Uterus (tissue), 4 donors: ENCODE measurements at regions of chr14 and their contacts with region 1.

Region 1: GRCh38 chr14:69818757-69819191 is 21.7 kb upstream of the SLC10A1 start:
- DNase-seq: peak; percentile 29 to 38
- H3K4me3 ChIP-seq: no peak overlapping the region
- H3K27ac ChIP-seq: no peak overlapping the region
- H3K4me1 ChIP-seq: no peaks in the 10 kb centered on the region
- H3K27me3 ChIP-seq: no peaks in the 10 kb centered on the region
- CTCF ChIP-seq: peak; percentile 79 to 92 (median 85)
- POLR2A ChIP-seq: no peak

Region 2: DNA sequence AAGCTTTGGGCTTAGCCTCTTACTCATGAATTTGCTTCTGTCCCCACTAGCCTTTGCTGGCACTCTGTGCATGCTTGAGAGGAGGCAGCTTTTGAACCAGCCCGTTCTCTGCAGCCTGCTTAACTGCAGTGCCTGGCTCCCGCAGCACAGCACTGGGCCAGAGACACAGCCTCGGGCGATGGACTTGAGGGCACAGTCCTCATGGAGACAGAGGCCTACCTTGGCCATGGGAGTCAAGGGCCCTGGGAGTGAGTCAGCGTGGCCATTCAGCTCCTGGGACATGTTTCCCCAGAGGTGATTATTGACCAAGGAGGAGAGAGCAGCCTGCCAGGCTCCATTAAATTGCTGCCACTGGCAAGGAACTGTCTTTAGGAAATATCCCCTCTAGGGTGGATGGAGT is 154.0 kb after region 1 on chr14:
- intact Hi-C with region 1: no loop called
- DNase-seq: no peak
- H3K4me3 ChIP-seq: no peak overlapping the region
- H3K27ac ChIP-seq: no peak overlapping the region
- H3K4me1 ChIP-seq: no peaks in the 10 kb centered on the region
- H3K27me3 ChIP-seq: no peaks in the 10 kb centered on the region
- CTCF ChIP-seq: no peak
- POLR2A ChIP-seq: no peak

Region 3: GRCh38 chr14:70027785-70028428 is 209.1 kb after region 1 on chr14:
- intact Hi-C with region 1: loop called (anchors 5 kb)
- DNase-seq: peak; percentile 59 to 72
- H3K4me3 ChIP-seq: no peak overlapping the region
- H3K27ac ChIP-seq: no peak overlapping the region
- H3K4me1 ChIP-seq: no peaks in the 10 kb centered on the region
- H3K27me3 ChIP-seq: no peaks in the 10 kb centered on the region
- CTCF ChIP-seq: peak; percentile 77 to 87 (median 80)
- POLR2A ChIP-seq: no peak